Right ventricle myocardium inferior (tissue), 1 donor: ENCODE measurements at regions of chr1 and their contacts with region 1.

Region 1: DNA sequence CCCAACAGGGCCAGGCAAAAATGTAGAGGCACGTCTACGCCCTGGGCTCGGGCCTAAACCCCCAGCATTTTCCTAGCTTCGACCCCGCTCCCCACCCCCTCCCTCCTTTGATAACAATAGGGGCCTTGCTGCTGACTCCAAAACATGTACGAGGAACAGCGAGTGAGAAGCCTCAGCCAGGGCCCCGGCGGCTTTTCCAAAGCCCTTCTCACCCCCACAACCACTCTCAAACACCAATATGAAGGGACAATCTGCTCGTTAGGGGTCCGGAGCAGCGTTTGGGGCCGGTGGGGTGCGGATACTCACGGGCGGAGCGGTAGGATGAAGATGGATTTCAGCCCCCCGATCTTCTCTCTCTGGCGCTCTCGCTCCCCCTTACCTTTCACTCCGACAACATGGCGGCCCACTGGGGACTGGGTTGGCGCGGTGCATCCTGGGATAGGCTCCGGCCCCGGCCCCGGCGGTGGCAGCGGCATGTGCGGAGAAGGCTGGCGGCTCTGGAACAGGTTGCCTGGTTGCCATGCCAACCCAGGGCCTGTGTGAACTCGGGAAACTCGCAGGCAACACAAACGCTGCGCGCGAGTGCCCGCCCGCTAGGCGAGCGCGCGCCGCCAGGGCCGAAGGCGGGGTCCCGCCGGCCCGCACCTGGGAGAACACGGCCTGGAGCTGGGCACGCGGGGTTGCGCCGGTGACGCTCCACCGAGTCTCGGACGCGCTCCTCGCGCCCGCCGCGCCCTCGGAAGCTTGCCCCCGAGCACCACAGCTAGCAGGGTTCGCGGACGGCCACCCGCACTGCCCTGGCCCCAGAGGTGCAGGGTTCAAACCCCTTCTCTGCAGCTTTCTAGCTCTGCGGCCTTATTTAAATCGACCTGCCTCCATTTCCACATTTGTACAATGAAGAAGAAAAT is at the start of gene PUM1:
- DNase-seq: peak; percentile 99
- ATAC-seq: peak; percentile 100
- total RNA-seq, gene PUM1: 71.1 TPM

Region 2: DNA sequence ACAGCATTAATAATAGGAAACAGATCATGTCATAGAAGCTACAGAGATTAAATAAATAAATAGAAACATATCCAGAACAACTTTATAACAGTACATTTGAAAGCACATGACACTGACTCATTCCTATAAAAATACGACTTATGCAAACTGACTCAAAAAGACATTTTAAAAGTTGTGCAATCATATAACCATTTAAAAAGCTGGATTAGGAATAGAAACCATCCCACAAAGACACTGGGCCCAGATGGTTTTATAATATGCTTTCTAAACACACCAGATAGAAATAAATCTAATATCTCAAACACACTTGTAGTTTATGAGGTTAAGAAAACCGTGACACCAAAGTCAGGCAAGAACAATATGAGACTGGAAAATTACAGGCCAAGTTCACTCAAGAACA is 389.8 kb before region 1 on chr1:
- intact Hi-C with region 1: no loop called
- DNase-seq: no peak
- ATAC-seq: no peak

Region 3: DNA sequence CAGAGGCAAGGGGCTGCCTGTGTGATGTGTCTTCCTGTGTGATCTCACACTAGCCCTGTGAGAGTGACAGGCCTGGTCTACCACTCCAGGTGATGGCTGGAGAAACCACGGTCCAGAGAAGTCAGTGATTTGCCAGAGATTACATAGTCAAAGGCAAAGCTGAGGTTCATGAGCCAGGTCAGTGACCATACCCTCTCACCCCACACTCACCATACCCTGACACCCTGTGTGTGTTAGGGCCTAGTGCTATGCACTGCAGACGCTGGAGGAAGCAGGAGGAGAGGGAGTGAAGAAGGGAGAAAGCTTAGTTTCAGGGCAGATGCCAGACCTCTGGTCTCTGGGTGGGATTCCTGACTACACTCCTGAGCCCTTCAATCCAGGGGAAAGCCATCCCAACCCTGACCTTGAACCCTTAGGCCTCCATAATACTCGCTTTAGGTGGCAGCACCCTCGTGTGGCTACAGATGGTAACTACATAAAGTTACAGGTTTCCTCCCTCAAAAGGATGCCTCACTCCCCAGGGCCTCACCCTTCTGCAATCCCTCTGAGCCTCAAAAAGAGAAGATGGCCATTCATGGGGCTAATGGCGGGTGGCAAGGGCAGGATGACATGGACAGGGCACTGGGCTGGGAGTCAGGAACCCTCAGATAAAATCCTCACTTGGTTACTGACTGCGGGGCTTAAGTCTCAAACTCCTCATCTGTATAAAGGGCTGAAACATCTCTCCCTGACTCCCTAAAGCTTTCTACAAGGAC is 136.3 kb before region 1 on chr1:
- intact Hi-C with region 1: loop called (anchors 2 kb)
- DNase-seq: no peak
- ATAC-seq: peak; percentile 59

Region 4: DNA sequence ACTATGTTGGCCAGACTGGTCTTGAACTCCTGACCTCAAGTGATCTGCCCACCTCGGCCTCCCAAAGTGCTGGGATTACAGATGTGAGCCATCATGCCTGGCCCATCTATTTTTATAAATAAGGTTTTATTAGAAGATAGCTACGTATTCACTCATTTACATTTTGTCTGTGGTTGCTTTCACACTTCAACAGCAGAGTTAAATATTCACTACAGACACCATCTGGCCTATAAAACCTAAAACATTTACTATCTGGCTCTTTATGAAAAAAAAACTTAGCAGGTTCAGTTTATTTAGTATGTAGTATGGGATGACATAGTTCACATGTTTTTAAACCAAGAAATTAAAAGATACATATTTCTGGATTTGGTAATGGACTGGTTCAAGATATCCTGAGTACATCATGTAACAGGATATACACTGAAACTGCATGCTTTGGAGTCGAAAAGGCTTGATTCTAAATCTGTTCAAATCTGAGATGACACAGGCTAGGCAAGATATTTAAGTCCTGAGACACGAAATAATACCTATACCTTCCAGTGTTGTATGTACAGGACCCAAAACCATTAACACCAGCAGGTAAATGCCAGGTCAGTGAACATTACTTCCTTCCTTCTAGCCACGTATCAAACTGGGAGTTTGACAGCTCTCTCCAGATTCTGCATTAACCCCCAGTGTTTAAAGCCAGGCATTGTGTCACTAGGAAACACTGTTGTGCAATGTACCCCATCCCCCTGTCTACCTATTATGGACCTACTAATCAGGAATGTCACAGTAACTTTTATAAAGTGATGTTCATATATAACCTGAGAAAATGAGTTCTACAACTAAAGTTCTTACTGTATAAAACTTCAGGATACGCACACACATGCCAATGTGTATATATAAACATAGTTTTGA is 102.7 kb before region 1 on chr1:
- intact Hi-C with region 1: loop called (anchors 5 kb)
- DNase-seq: no peak
- ATAC-seq: no peak